ENCODE measurements at regions of chr1 and their contacts with region 1.

Region 1: DNA sequence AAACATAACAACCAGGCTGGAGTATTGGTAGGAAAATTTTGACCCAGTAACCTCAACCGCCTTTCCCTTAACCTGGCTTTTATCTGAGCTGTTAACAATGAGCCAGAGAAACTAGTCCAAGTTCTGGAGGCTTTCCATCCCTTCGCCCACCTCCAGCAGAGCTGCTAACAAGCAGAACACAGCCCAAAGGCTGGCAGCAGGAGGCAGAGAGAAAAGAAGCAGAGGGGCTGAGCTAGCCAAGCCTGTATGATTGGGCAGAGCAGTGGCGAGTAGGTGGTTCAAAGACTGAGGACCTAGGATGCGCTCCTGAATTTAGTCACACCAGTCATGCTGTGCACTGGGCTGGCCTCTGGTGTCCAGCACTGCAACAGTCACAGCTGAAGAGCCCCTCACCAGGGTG is 123.0 kb downstream of the TNR start:
- DNase-seq: no peak
- H3K4me3 ChIP-seq: no peak overlapping the region
- H3K27ac ChIP-seq: no peak overlapping the region
- H3K4me1 ChIP-seq: no peaks in the 10 kb centered on the region
- H3K27me3 ChIP-seq: peaks cover 3% of the 10 kb centered on the region
- CTCF ChIP-seq: no peak

Region 2: GRCh38 chr1:175449306-175449705 is 171.1 kb before region 1 on chr1:
- CTCF ChIA-PET with region 1: no interaction called
- dilution Hi-C with region 1: no loop called
- in situ Hi-C with region 1: no loop called
- intact Hi-C with region 1: no loop called
- DNase-seq: no peak
- H3K4me3 ChIP-seq: no peak overlapping the region
- H3K27ac ChIP-seq: no peak overlapping the region
- H3K4me1 ChIP-seq: no peaks in the 10 kb centered on the region
- H3K27me3 ChIP-seq: no peaks in the 10 kb centered on the region
- CTCF ChIP-seq: no peak

Region 3: GRCh38 chr1:175525222-175525621 is 95.2 kb before region 1 on chr1:
- CTCF ChIA-PET with region 1: no interaction called
- dilution Hi-C with region 1: loop called (anchors 5 kb)
- in situ Hi-C with region 1: no loop called
- intact Hi-C with region 1: no loop called
- DNase-seq: no peak
- H3K4me3 ChIP-seq: no peak overlapping the region
- H3K27ac ChIP-seq: no peak overlapping the region
- H3K4me1 ChIP-seq: peaks cover 7% of the 10 kb centered on the region
- H3K27me3 ChIP-seq: no peaks in the 10 kb centered on the region
- CTCF ChIP-seq: no peak

Region 4: GRCh38 chr1:175576865-175577264 is 43.5 kb before region 1 on chr1:
- CTCF ChIA-PET with region 1: no interaction called
- dilution Hi-C with region 1: loop called (anchors 5 kb)
- in situ Hi-C with region 1: no loop called
- intact Hi-C with region 1: no loop called
- DNase-seq: no peak
- H3K4me3 ChIP-seq: no peak overlapping the region
- H3K27ac ChIP-seq: no peak overlapping the region
- H3K4me1 ChIP-seq: no peaks in the 10 kb centered on the region
- H3K27me3 ChIP-seq: peaks cover 4% of the 10 kb centered on the region
- CTCF ChIP-seq: no peak

Measured in mammary epithelial cell (primary cell).